ENCODE measurements at regions of chr2 and their contacts with region 1.

Region 1: DNA sequence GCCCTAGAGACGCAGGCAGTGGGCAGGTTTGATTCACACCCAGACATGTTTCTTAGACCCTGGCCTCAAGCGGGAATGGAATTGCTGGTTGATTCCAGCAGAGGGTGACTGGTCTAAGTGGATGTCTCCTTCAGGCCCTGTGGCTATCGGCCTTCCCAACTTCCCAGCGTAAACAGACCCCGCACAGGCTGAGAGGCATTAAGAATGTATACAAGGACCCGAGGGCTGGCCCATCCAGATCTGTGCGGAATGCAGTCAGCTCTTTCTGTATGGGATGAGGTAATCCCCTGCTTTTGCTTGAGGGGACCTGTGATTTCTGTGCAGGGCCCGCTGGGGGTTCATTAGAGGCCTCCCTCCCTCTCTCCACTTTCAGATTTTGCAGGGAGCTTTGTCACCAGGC is 6.5 kb downstream of the ACKR3 start:
- DNase-seq: no peak
- H3K4me3 ChIP-seq: no peak overlapping the region
- H3K27ac ChIP-seq: no peak overlapping the region
- H3K4me1 ChIP-seq: peaks cover 75% of the 10 kb centered on the region
- H3K27me3 ChIP-seq: no peaks in the 10 kb centered on the region
- CTCF ChIP-seq: no peak
- POLR2A ChIP-seq: no peak

Region 2: GRCh38 chr2:236626391-236627081 is 50.4 kb after region 1 on chr2:
- intact Hi-C with region 1: no loop called
- DNase-seq: no peak
- H3K4me3 ChIP-seq: no peak overlapping the region
- H3K27ac ChIP-seq: no peak overlapping the region
- H3K4me1 ChIP-seq: no peaks in the 10 kb centered on the region
- H3K27me3 ChIP-seq: no peaks in the 10 kb centered on the region
- CTCF ChIP-seq: no peak
- POLR2A ChIP-seq: no peak

Region 3: DNA sequence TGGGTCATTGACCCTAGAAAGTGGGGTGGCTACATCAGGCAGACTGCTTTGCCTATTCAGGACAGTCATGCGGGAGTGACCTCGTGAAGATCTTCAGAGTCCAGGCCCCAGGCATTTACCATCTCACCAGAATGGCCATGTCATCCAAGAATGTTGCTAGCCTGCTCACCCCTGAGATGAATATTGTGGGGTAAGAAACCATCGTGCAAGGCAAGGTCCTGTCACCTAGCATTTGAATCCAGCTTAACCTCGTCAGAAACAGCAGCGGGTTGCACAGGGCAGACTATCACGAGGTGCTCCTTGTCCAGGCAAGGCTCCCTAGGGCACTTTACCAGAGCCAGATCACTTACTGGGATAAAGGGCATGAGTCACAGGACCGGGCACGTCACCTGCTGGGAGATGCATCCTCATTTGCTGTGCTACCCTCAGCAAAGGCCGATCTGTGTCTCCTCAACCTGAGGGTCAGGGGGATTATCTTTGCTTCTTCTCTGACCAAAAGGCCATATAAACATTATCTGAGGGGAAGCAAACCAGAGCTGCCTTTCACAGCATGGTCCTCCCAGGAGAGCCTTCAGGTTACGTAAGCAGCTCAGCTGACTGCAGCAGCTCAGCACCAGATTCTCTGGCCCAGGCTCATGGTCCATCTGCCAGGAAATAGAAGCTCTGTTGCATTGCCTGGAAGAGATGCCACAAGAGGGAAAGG is 155.9 kb after region 1 on chr2:
- intact Hi-C with region 1: loop called (anchors 10 kb)
- DNase-seq: peak in 1 of 2 donors; percentile 96
- H3K4me3 ChIP-seq: no peak overlapping the region
- H3K27ac ChIP-seq: peak overlapping the region; percentile 60
- H3K4me1 ChIP-seq: peaks cover 17% of the 10 kb centered on the region
- H3K27me3 ChIP-seq: no peaks in the 10 kb centered on the region
- CTCF ChIP-seq: no peak
- POLR2A ChIP-seq: no peak